ENCODE measurements at regions of chr16 and their contacts with region 1.

Region 1: GRCh38 chr16:58035356-58036170 is 10.0 kb downstream of the MMP15 start:
- DNase-seq: peak; percentile 37
- H3K4me3 ChIP-seq: peak overlapping the region; percentile 46
- H3K27ac ChIP-seq: peak overlapping the region; percentile 54
- H3K4me1 ChIP-seq: peaks cover 45% of the 10 kb centered on the region
- CTCF ChIP-seq: 0 out of 2 replicates have a peak, but pooled peaks have one; percentile 26

Region 2: DNA sequence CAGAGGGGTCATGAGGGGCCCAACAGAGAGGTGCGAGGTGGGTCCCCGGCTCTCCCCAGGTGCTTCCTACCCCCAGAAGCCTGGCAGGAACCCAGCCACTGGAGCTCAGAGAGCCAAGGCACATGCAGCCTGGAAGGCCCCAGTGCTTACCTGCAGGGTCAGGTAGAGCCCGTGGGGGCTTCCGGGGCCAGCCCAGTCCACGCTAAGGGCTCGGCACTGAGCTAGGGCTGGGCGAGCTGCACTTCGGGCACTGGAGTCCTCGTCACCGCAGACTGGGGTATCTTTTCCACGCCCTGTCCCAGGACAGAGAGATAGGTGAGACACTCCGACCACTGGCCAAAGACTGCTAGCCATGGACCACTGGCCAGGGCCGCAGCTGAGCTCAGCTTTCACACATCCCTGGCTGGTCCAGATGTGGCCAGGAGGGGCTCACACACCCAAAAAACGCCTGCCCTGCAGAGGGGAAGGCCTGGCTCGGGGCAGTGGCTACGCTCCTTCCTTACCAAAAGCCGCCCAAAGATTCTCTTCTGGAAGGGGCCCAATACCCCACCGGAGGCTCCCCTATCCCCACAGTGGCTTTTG is 240.6 kb before region 1 on chr16:
- CTCF ChIA-PET with region 1: interaction called, 13 read pairs
- POLR2A ChIA-PET with region 1: no interaction called
- intact Hi-C with region 1: no loop called
- DNase-seq: no peak
- H3K4me3 ChIP-seq: no peak overlapping the region
- H3K27ac ChIP-seq: no peak overlapping the region
- H3K4me1 ChIP-seq: no peaks in the 10 kb centered on the region
- CTCF ChIP-seq: no peak

Region 3: GRCh38 chr16:57899771-57900661 is 135.5 kb before region 1 on chr16:
- CTCF ChIA-PET with region 1: no interaction called
- POLR2A ChIA-PET with region 1: no interaction called
- intact Hi-C with region 1: loop called (anchors 1 kb)
- DNase-seq: peak; percentile 68
- H3K4me3 ChIP-seq: no peak overlapping the region
- H3K27ac ChIP-seq: no peak overlapping the region
- H3K4me1 ChIP-seq: no peaks in the 10 kb centered on the region
- CTCF ChIP-seq: peak; percentile 98

Region 4: DNA sequence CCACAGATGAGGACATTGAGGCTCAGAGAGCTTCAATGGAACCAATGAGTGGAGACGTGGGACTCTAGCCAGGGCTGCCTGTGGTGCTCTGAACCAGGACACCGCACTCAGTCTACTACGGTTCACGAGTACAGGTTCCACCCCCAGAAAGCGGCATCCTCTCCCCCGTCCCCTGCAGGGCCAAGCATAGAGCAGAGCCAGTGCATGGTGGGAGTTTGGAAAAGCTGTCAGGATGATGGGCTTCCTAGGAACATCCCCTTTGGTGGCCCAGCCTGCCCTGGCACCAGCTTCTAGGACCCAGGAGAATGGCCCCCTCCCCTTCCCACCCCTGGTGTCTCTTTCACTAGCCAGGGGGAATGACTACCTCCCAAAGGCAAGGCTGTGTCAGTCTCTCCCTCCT is 43.5 kb before region 1 on chr16:
- CTCF ChIA-PET with region 1: interaction called, 13 read pairs
- POLR2A ChIA-PET with region 1: no interaction called
- intact Hi-C with region 1: no loop called
- DNase-seq: no peak
- H3K4me3 ChIP-seq: no peak overlapping the region
- H3K27ac ChIP-seq: no peak overlapping the region
- H3K4me1 ChIP-seq: no peaks in the 10 kb centered on the region
- CTCF ChIP-seq: no peak

Region 5: DNA sequence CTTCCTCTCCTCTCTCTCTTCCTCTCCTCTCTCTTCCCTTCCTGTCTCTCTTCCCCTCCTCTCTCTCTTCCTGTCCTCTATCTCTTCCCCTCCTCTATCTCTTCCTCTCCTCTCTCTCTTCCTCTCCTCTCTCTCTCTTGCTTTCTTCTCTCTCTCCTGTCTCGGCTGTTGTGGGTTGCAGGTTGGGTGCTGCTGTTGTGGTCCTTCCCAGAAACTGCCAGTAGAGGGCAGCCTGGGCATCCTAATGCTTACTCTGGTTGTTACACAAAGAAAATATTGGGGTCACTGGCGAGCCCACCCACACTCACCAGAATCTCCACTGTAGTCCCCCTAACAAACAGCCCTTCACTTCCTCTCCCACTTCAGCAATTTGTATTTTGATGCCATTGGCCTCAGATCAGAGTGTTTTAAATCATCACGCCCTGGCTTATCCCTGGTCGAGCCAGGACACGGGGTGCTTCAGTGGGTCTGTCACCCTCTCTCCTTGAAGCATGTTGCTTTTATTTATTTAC is 14.9 kb before region 1 on chr16:
- CTCF ChIA-PET with region 1: no interaction called
- POLR2A ChIA-PET with region 1: no interaction called
- intact Hi-C with region 1: no loop called
- DNase-seq: peak; percentile 67
- H3K4me3 ChIP-seq: no peak overlapping the region
- H3K27ac ChIP-seq: no peak overlapping the region
- H3K4me1 ChIP-seq: peaks cover 8% of the 10 kb centered on the region
- CTCF ChIP-seq: peak; percentile 98

Region 6: DNA sequence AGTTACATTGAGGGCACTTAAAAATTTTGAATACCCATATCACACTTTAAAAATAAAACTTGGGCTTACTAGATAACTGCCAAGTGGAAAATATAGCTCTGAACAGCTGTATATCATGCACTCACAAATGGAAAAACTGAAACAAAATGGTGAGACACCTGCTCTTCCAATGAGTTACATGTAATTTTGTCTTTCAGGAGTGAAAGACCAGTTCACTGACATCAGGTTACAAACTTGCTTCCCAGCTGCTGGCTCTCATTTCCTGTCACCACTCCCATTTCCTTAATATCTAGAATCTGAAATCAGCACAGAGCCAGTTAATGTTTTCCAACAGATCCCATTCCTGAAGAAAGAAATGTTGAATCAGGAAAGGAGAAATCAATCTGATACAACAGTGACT is 151.5 kb after region 1 on chr16:
- CTCF ChIA-PET with region 1: no interaction called
- POLR2A ChIA-PET with region 1: no interaction called
- intact Hi-C with region 1: no loop called
- DNase-seq: no peak
- H3K4me3 ChIP-seq: no peak overlapping the region
- H3K27ac ChIP-seq: no peak overlapping the region
- H3K4me1 ChIP-seq: no peaks in the 10 kb centered on the region
- CTCF ChIP-seq: no peak

Region 7: GRCh38 chr16:58649707-58650106 is 614.1 kb after region 1 on chr16:
- CTCF ChIA-PET with region 1: interaction called, 10 read pairs
- POLR2A ChIA-PET with region 1: no interaction called
- intact Hi-C with region 1: no loop called
- DNase-seq: no peak
- H3K4me3 ChIP-seq: no peak overlapping the region
- H3K27ac ChIP-seq: no peak overlapping the region
- H3K4me1 ChIP-seq: peaks cover 9% of the 10 kb centered on the region
- CTCF ChIP-seq: no peak